GM10248 (cell line): ENCODE measurements at regions of chr1 and their contacts with region 1.

Region 1: DNA sequence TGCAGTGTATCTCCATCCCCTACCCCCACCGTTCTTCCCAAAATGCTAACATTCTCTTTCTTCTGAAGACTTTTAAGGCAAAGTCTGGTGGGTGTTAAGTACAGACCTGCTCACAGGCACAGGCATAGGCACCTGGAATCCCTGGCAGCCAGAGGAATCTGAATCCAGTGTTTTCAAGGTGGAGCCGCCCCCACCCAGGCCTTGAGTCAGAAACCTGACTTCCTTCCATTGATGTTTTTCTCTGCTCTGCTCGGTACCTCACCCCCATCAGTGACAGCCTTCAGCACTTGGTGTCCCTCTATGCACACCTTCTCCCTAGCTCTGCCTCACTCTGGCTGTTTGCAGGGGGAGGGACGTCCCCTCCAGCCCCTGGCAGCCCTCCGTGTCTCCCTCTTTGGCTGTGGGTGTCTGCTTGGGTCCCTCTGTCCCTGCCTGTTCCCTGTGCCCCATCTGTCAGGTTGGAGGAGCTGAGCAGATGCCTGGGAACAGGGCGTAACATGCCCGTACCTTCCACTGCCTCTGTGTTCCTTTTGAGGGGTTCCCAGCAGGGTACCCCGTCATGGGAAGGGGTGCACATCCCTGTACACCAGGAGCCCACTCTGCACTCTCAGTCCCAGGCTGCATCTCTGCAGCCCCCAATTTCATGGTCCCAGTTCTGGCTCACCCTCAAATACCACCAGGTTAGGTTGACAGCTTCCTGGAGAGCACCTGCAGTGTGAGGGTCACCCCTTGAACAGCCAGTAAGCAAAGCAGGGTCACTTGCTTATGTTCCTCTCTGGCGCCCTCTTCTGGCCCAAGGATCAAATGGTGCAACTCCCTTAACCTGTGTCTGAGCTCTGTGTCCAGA is 6.7 kb downstream of the NCDN start:
- DNase-seq: peak; percentile 86
- CTCF ChIP-seq: peak; percentile 83

Region 2: GRCh38 chr1:35544978-35545377 is 19.3 kb before region 1 on chr1:
- CTCF ChIA-PET with region 1: interaction called, 17 read pairs
- POLR2A ChIA-PET with region 1: interaction called, 4 read pairs
- DNase-seq: peak; percentile 54
- CTCF ChIP-seq: peak; percentile 53

Region 3: DNA sequence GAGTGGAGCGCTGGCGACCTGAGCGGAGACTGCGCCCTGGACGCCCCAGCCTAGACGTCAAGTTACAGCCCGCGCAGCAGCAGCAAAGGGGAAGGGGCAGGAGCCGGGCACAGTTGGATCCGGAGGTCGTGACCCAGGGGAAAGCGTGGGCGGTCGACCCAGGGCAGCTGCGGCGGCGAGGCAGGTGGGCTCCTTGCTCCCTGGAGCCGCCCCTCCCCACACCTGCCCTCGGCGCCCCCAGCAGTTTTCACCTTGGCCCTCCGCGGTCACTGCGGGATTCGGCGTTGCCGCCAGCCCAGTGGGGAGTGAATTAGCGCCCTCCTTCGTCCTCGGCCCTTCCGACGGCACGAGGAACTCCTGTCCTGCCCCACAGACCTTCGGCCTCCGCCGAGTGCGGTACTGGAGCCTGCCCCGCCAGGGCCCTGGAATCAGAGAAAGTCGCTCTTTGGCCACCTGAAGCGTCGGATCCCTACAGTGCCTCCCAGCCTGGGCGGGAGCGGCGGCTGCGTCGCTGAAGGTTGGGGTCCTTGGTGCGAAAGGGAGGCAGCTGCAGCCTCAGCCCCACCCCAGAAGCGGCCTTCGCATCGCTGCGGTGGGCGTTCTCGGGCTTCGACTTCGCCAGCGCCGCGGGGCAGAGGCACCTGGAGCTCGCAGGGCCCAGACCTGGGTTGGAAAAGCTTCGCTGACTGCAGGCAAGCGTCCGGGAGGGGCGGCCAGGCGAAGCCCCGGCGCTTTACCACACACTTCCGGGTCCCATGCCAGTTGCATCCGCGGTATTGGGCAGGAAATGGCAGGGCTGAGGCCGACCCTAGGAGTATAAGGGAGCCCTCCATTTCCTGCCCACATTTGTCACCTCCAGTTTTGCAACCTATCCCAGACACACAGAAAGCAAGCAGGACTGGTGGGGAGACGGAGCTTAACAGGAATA is 13.1 kb after region 1 on chr1:
- CTCF ChIA-PET with region 1: interaction called, 29 read pairs
- POLR2A ChIA-PET with region 1: no interaction called
- DNase-seq: peak; percentile 69
- CTCF ChIP-seq: no peak

Region 4: DNA sequence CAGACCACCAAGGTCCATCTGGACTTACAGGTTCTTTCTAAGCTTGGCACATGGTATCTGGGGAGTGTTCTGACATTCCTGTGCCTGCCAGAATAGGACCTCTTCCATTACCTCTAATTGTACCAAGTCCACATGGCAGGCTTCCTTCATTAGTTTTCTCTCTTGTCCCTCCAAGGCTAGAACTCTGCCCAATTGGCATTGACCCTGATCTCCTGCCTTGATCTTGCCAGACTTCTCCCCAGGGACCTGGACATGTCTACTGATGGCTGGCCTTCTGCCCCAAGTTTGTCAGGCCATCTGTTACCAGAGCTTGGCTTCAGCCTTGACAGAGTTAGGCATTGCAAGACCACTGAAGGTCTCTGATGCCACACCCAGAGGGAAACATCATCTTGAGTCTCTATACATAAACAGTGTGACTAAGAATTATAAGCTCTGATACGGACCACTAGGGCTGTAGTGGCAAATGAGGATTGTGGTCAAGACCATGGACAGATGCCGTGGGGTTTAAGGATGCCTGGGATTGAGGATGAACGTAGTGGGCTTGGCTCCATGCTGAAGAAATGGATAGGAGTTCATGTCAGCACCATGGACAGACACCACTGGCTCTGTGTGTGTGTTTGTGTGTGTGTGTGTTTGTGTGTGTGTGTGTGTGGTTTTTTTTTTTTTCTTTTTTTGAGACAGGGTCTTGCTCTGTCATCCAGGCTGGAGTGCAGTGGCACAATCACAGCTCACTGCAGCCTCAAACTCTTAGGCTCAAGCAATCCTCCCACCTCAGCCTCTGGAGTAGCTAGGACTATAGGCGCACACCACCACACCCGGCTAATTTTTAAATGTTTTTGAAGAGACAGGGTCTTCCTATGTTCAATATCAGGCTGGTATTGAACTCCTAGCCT is 96.6 kb after region 1 on chr1:
- CTCF ChIA-PET with region 1: no interaction called
- POLR2A ChIA-PET with region 1: no interaction called
- DNase-seq: no peak
- CTCF ChIP-seq: no peak

Region 5: GRCh38 chr1:35737120-35737519 is 172.9 kb after region 1 on chr1:
- CTCF ChIA-PET with region 1: interaction called, 137 read pairs
- POLR2A ChIA-PET with region 1: no interaction called
- DNase-seq: no peak
- CTCF ChIP-seq: no peak

Region 6: DNA sequence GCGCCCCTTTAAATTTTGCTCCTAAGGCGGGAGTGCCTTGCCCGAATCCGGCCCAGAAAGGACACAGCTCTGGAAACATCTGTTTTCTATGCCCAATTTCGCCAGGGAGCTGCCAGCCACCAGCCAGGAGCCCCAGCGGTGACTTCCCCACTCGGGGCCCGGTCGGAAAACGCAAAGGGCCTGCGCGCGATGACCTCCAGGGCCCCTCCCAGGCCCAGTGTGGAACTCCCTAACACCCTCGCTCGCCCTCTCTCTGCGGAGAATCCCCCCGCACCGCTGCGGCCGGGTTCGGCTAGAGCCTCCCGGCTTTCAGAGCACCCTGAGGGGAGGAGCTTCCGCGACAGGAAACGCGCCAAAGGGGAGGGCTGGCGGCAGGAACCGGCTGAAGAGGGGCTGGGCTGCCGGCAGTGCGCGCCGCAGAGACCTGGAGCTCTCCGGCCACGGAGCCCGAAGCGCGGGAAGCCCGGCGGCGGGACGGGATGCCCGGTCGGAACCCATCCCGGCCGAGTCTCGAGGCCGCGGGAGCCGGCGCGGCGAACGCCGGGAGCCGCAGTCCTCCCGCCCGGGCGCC is 205.0 kb after region 1 on chr1:
- CTCF ChIA-PET with region 1: interaction called, 93 read pairs
- POLR2A ChIA-PET with region 1: no interaction called
- DNase-seq: peak; percentile 94
- CTCF ChIP-seq: no peak